ENCODE measurements at regions of chr15 and their contacts with region 1.

Region 1: GRCh38 chr15:67065444-67066093 is at the start of gene SMAD3:
- DNase-seq: peak; percentile 93
- H3K4me3 ChIP-seq: peak within 1 kb of the TSS; percentile 81 to 96 (median 91)
- H3K27ac ChIP-seq: peak within 1 kb of the TSS; percentile 81
- H3K4me1 ChIP-seq: peaks cover 38% of the 10 kb centered on the region
- H3K27me3 ChIP-seq: no peaks in the 10 kb centered on the region
- CTCF ChIP-seq: no peak
- total RNA-seq, gene SMAD3: 8.7 to 41.0 TPM

Region 2: DNA sequence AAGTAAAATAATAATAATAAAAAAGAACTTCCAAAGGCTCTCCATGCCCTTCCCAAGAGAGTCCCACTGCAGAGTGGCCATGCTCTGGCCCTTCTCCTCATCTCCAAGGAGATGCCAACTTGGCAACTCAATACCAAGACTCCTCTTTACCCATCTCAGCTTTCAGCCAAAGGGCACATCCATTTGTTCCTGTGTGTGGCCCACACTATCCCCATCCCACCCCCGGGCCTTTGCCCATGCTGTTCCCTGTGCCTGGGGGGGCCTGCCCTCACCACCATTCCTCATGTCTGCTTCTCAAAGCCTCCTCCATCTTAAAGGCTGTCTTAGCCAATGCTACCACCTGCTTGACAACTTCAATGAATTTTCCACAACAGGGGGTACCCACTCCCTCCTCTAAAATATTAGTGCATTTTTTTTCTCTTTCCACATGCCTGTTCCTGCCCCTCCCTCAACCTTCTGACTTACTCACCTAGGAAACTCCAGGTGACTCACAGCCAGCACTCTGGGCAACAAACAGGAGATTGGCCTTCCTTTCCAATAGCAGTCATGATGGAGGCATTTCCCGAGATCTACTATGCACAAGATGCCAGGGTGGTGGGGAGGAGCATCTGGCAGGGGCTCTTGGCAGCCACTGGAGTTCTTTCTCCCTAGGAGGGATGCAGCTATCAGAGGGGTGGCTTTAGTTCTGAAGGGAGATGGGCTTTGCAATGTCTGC is 109.5 kb before region 1 on chr15:
- CTCF ChIA-PET with region 1: no interaction called
- dilution Hi-C with region 1: no loop called
- in situ Hi-C with region 1: loop called in 1 of 2 experiments (anchors 10 kb)
- intact Hi-C with region 1: loop called (anchors 5 kb)
- DNase-seq: peak; percentile 94
- H3K4me3 ChIP-seq: no peak overlapping the region
- H3K27ac ChIP-seq: peak overlapping the region; percentile 73
- H3K4me1 ChIP-seq: peaks cover 24% of the 10 kb centered on the region
- H3K27me3 ChIP-seq: no peaks in the 10 kb centered on the region
- CTCF ChIP-seq: no peak

Region 3: GRCh38 chr15:67013696-67014095 is 51.9 kb before region 1 on chr15:
- CTCF ChIA-PET with region 1: no interaction called
- dilution Hi-C with region 1: no loop called
- in situ Hi-C with region 1: no loop called
- intact Hi-C with region 1: no loop called
- DNase-seq: peak; percentile 88
- H3K4me3 ChIP-seq: no peak overlapping the region
- H3K27ac ChIP-seq: no peak overlapping the region
- H3K4me1 ChIP-seq: peaks cover 10% of the 10 kb centered on the region
- H3K27me3 ChIP-seq: no peaks in the 10 kb centered on the region
- CTCF ChIP-seq: no peak

Region 4: DNA sequence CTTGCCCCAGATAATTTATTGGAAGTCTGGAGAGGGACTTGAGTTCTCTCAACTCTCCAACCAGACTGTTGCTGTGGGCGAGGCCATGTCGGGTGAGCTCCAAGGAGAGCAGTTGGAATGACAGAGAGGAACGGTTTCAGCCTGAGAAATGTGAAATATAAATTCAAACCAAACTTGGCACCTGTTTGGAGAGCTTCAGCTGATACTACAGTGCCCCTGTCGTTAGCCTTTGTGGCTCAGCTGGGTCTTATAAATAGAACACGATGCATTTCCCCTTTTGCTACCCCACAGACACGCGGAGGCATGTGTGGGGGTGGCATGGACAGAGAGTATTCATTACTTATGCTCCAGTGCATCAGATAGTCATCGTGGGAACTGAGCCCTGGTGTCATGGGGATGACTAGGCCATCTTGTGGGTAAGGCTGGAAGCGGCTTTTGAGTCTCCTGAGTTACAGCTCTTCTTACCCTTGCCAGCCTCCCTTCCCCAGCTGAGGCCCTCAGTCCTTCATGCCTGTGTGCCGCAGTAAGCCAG is 15.4 kb after region 1 on chr15:
- CTCF ChIA-PET with region 1: no interaction called
- dilution Hi-C with region 1: no loop called
- in situ Hi-C with region 1: no loop called
- intact Hi-C with region 1: loop called (anchors 2 kb)
- DNase-seq: peak; percentile 80
- H3K4me3 ChIP-seq: no peak overlapping the region
- H3K27ac ChIP-seq: peak overlapping the region; percentile 84
- H3K4me1 ChIP-seq: peaks cover 45% of the 10 kb centered on the region
- H3K27me3 ChIP-seq: no peaks in the 10 kb centered on the region
- CTCF ChIP-seq: peak in 1 of 2 donors; percentile 41

Region 5: GRCh38 chr15:67098768-67099282 is 33.3 kb after region 1 on chr15:
- CTCF ChIA-PET with region 1: no interaction called
- dilution Hi-C with region 1: no loop called
- in situ Hi-C with region 1: no loop called
- intact Hi-C with region 1: no loop called
- DNase-seq: no peak
- H3K4me3 ChIP-seq: no peak overlapping the region
- H3K27ac ChIP-seq: peak overlapping the region; percentile 43
- H3K4me1 ChIP-seq: peaks cover 44% of the 10 kb centered on the region
- H3K27me3 ChIP-seq: no peaks in the 10 kb centered on the region
- CTCF ChIP-seq: no peak

Region 6: GRCh38 chr15:67125589-67126502 is 60.3 kb after region 1 on chr15:
- CTCF ChIA-PET with region 1: no interaction called
- dilution Hi-C with region 1: no loop called
- in situ Hi-C with region 1: no loop called
- intact Hi-C with region 1: loop called (anchors 5 kb)
- DNase-seq: peak; percentile 93
- H3K4me3 ChIP-seq: peak overlapping the region in 1 of 3 experiments; percentile 4
- H3K27ac ChIP-seq: peak overlapping the region; percentile 92
- H3K4me1 ChIP-seq: peaks cover 73% of the 10 kb centered on the region
- H3K27me3 ChIP-seq: no peaks in the 10 kb centered on the region
- CTCF ChIP-seq: no peak

Region 7: GRCh38 chr15:67196672-67197363 is 131.2 kb after region 1 on chr15:
- CTCF ChIA-PET with region 1: no interaction called
- dilution Hi-C with region 1: no loop called
- in situ Hi-C with region 1: no loop called
- intact Hi-C with region 1: loop called (anchors 5 kb)
- DNase-seq: no peak
- H3K4me3 ChIP-seq: no peak overlapping the region
- H3K27ac ChIP-seq: no peak overlapping the region
- H3K4me1 ChIP-seq: no peaks in the 10 kb centered on the region
- H3K27me3 ChIP-seq: no peaks in the 10 kb centered on the region
- CTCF ChIP-seq: no peak

Region 8: GRCh38 chr15:67254238-67255175 is 188.9 kb after region 1 on chr15 and contains the starts of genes AAGAB and IQCH:
- CTCF ChIA-PET with region 1: no interaction called
- dilution Hi-C with region 1: loop called (anchors 5 kb)
- in situ Hi-C with region 1: no loop called
- intact Hi-C with region 1: loop called (anchors 1 kb)
- DNase-seq: peak; percentile 99
- H3K4me3 ChIP-seq: peak within 1 kb of the TSS; percentile 66 to 80 (median 78)
- H3K27ac ChIP-seq: peak within 1 kb of the TSS; percentile 98
- H3K4me1 ChIP-seq: no peaks in the 10 kb centered on the region
- H3K27me3 ChIP-seq: no peaks in the 10 kb centered on the region
- CTCF ChIP-seq: no peak
- total RNA-seq, gene AAGAB: 52.2 to 62.5 TPM
- total RNA-seq, gene IQCH: 4.9 to 8.8 TPM

Measured in mammary epithelial cell (primary cell).